ENCODE measurements at regions of chr10 and their contacts with region 1.

Region 1: DNA sequence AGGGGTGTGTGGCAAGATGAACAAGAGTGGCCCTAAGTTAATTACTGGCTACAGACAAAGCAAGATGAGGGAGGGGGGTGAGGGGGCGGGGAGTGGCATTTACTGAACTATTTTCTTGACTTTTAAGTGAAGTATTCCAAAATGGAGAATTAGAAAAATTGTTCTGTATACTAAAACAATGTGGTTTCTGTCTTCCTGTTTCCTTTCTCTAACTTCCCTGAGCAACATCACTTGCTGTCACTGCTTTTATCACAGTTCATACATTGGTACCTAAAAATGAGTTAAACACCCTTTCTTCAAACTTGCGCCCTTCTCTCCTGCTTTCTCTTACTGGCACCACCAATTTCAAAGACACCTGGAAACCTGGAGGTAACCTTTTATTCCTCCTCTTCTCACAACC is 21.6 kb downstream of the PDZD8 start:
- DNase-seq: no peak
- H3K4me3 Mint-ChIP-seq: no peak overlapping the region
- H3K27ac Mint-ChIP-seq: no peak overlapping the region
- H3K4me1 Mint-ChIP-seq: peaks cover 29% of the 10 kb centered on the region
- H3K27me3 Mint-ChIP-seq: no peaks in the 10 kb centered on the region

Region 2: GRCh38 chr10:116555880-116556279 is 797.8 kb before region 1 on chr10:
- intact Hi-C with region 1: no loop called
- DNase-seq: no peak
- H3K4me3 Mint-ChIP-seq: no peak overlapping the region
- H3K27ac Mint-ChIP-seq: no peak overlapping the region
- H3K4me1 Mint-ChIP-seq: no peaks in the 10 kb centered on the region
- H3K27me3 Mint-ChIP-seq: no peaks in the 10 kb centered on the region

Region 3: DNA sequence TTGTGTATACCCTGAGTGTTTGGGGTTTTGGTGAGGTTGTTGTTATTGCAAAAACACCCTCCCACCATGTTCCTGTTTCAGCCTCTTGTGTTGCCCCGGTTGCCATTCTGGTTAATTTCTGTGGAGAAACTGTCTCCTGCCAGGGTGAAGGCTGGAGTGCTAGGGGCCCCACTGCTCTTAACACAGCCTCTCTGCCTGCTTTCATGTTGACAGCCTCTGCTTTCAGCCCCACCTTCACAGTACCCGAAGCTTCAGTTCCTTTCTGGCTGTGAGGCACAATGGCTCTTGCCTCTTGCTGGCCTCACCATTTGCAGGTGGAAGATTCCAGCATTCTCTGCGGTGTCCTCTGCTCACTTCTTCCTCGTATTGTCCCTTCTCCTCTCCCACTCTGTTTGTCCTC is 93.6 kb before region 1 on chr10:
- intact Hi-C with region 1: no loop called
- DNase-seq: no peak
- H3K4me3 Mint-ChIP-seq: peak overlapping the region; percentile 51
- H3K27ac Mint-ChIP-seq: peak overlapping the region; percentile 38
- H3K4me1 Mint-ChIP-seq: peaks cover 12% of the 10 kb centered on the region
- H3K27me3 Mint-ChIP-seq: peaks cover 18% of the 10 kb centered on the region

Region 4: DNA sequence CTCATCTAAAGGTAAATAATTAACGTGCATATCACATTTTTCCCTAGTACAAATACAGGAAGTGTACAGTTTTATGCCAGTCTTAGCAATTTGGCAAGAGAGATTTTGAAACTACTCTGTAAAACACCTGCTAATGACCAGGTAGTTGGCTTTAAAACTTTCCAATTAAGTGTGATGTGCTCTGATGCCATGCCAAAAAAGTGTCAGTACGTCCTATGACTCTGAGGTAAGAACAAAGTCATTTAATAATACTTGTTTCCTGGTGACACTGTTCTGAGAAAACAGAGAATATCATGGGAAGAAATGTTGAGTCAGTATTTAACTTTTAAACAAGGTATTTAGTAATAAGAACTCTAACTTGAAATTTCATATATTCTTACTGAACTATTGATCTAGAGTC is 11.9 kb after region 1 on chr10:
- intact Hi-C with region 1: no loop called
- DNase-seq: no peak
- H3K4me3 Mint-ChIP-seq: no peak overlapping the region
- H3K27ac Mint-ChIP-seq: no peak overlapping the region
- H3K4me1 Mint-ChIP-seq: peaks cover 36% of the 10 kb centered on the region
- H3K27me3 Mint-ChIP-seq: no peaks in the 10 kb centered on the region

Region 5: DNA sequence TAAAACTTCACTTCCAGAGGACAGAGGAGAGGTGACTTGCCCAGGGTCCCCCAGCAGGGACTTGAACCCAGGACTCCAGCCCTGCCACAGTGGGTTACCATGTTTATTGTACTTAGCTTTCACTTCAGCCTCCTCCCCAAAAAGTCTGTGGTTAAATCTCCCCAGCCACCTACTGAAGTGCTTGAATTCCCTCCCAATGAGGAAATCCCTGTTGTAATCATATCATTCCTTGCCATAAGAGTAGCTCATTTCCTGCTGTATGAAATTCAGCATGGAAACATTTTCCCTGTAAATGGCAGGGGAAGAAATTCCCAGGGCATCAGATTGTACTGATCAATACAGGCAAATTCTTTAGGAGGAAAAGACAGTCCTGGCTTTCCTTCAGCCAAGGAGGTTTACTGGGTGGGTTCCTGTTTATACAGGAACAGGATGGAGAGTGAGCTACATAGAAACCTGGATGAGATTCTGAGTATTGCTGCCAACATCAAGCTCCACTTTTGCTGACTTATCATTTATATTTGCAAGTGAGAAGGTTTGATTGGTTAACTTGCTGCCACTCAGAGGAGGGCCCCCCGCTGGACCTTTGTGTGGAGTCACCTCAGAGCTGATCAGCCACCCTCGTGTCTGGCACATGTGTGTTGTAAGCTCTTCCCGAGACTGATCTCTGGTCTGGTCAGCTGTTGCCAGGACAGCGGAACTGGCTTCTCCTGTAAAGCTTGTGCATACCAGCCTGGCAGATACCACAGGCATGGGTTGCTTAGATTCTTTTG is 37.9 kb after region 1 on chr10:
- intact Hi-C with region 1: loop called (anchors 1 kb)
- DNase-seq: no peak
- H3K4me3 Mint-ChIP-seq: no peak overlapping the region
- H3K27ac Mint-ChIP-seq: no peak overlapping the region
- H3K4me1 Mint-ChIP-seq: no peaks in the 10 kb centered on the region
- H3K27me3 Mint-ChIP-seq: peaks cover 28% of the 10 kb centered on the region

Region 6: GRCh38 chr10:117568334-117568733 is 214.7 kb after region 1 on chr10:
- intact Hi-C with region 1: no loop called
- DNase-seq: no peak
- H3K4me3 Mint-ChIP-seq: no peak overlapping the region
- H3K27ac Mint-ChIP-seq: no peak overlapping the region
- H3K4me1 Mint-ChIP-seq: no peaks in the 10 kb centered on the region
- H3K27me3 Mint-ChIP-seq: peaks cover 2% of the 10 kb centered on the region